B cell (primary cell): ENCODE measurements at regions of chr9 and their contacts with region 1.

Region 1: GRCh38 chr9:385818-386398 is 171.2 kb downstream of the DOCK8 start:
- DNase-seq: no peak
- ATAC-seq: no peak
- H3K4me3 ChIP-seq: no peak overlapping the region
- H3K4me3 Mint-ChIP-seq: no peak overlapping the region
- H3K27ac ChIP-seq: no peak overlapping the region
- H3K27ac Mint-ChIP-seq: no peak overlapping the region
- H3K4me1 ChIP-seq: no peaks in the 10 kb centered on the region
- H3K4me1 Mint-ChIP-seq: no peaks in the 10 kb centered on the region
- H3K27me3 ChIP-seq: no peaks in the 10 kb centered on the region
- H3K27me3 Mint-ChIP-seq: no peaks in the 10 kb centered on the region
- CTCF ChIP-seq: peak; percentile 60

Region 2: DNA sequence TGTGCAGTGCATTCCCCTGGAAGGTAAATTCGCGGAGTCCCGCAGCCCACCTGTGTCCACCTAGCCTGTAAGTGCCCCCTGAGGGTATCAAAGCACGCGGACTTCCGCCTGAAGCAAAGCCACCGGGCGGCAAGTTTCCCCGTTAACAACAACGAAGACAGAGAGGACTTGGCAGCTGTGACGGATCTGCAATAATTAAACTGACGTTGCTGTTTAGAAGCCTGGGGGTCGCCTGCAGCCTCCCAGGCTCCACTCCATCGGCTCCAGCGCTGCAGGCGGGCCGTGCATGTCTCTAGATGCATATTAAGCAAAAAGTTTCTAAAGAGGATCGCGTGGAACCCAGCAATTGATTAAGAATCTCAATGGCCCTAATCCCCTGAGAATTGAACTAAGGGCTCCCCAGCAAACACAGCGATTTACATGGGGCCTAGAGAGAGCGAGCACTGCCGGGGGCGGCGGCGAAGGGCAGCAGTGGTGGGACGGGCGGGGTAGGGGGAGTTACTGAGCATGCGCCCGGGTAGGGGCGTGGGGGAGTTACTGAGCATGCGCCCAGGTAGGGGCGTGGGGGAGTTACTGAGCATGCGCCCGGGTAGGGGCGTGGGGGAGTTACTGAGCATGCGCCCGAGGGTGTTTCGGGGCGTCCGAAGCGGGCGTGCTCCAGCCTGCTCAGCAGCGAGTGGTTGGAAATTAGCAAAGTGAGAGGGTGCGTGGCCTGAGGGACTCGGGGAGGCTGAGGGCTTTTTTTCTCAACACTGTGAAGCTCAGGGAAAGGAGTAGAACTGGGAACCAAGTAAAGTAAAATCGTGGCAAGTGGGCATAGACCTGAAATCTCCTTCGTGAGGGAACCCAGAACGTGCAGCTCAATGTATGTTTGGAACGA is 84.0 kb after region 1 on chr9:
- CTCF ChIA-PET with region 1: no interaction called
- POLR2A ChIA-PET with region 1: no interaction called
- intact Hi-C with region 1: no loop called
- DNase-seq: peak; percentile 93
- ATAC-seq: peak; percentile 92
- H3K4me3 ChIP-seq: peak overlapping the region; percentile 73 to 85 (median 76)
- H3K4me3 Mint-ChIP-seq: peak overlapping the region; percentile 99
- H3K27ac ChIP-seq: peak overlapping the region; percentile 58 to 66
- H3K27ac Mint-ChIP-seq: peak overlapping the region; percentile 99
- H3K4me1 ChIP-seq: peaks cover 16 to 27% of the 10 kb centered on the region in 2 donors
- H3K4me1 Mint-ChIP-seq: peaks cover 27% of the 10 kb centered on the region
- H3K27me3 ChIP-seq: no peaks in the 10 kb centered on the region
- H3K27me3 Mint-ChIP-seq: no peaks in the 10 kb centered on the region
- CTCF ChIP-seq: no peak

Region 3: DNA sequence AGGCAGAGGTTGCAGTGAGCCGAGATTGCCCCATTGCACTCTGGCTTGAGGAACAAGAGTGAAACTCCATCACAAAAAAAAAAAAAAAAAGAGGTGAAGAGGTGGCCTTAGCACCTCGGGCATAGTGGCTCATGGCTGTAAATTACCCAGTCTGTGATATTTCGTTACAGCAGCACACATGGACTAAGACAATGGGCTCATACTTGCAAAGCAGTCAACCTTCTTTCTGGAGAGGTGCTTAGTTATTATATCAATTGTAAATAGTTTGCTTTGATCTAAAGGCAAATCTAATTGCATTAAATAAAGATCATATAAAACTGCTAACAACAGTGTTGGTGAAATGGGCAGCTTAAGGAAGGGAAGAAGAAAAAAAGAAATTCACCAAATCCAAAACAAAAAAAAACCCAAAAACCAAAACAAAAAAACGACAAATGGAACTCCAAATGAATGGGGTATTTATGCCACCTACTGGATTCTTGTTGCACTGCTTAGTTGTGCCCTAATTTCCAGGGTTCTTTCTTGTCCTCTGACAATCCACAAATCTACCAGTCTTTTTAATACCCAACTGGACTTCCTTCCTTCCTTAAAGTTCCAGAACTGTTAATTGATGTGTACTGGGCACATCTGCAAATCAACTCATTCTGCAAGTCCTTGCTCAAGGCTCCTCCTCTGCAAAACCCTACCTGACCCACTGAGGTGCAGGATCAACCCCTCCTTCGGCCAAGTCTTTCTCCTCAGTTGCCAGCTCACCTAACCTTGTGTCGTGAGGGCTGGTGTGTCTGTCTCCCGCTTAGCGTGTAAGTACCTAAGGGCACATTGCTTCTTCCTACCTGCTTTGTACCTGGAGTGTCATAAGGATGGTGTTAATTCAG is 420.6 kb after region 1 on chr9:
- CTCF ChIA-PET with region 1: no interaction called
- POLR2A ChIA-PET with region 1: no interaction called
- intact Hi-C with region 1: loop called (anchors 10 kb)
- DNase-seq: peak; percentile 37
- ATAC-seq: no peak
- H3K4me3 ChIP-seq: no peak overlapping the region
- H3K4me3 Mint-ChIP-seq: no peak overlapping the region
- H3K27ac ChIP-seq: no peak overlapping the region
- H3K27ac Mint-ChIP-seq: no peak overlapping the region
- H3K4me1 ChIP-seq: no peaks in the 10 kb centered on the region
- H3K4me1 Mint-ChIP-seq: no peaks in the 10 kb centered on the region
- H3K27me3 ChIP-seq: peaks cover 0 to 6% (median 0%) of the 10 kb centered on the region in 4 experiments
- H3K27me3 Mint-ChIP-seq: peaks cover 17% of the 10 kb centered on the region
- CTCF ChIP-seq: peak; percentile 60